ENCODE measurements at regions of chr16 and their contacts with region 1.

Region 1: GRCh38 chr16:10737068-10737625 is 6.5 kb upstream of the NUBP1 start:
- DNase-seq: no peak
- ATAC-seq: peak; percentile 60

Region 2: DNA sequence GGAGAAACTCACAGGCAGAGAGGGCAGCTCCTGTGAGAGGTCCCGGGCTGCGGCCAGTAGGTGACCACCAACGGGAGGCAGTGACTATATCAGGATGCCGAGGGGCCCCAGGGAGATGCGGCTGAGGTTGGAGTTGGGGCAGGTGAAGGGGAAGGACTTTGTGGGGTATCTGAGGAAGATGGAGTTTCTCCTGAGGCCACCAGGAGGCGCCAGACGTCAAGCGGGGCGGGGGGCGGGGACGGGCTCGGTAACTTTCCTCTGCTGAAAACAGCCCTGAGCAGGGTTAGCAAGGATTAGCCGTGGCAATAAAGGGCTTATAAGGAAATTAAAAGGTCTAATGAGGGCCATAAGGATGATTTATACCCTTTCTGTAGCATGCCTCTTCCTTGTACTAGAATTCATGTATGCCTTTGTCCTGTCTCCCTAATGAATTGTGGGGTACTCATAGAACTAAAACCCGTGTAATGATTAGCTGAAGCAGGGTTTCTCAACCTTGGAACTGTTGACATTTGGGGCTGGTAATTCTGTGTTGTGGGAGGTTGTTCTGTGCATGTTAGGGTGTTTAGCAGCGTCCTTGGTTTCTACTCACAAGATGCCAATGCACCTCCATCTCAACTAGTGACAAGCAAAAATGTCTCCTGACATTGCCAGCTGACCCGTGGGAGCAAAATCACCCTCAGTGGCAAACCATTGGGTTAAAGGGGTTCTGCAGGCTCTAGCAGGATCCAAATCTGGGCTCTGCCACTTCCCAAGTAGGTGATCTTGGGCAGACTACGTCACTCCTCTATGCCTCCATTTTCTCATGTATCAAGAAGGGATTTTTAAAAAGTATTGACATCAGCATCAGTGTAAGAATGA is 480.1 kb before region 1 on chr16:
- intact Hi-C with region 1: loop called (anchors 5 kb)
- DNase-seq: no peak
- ATAC-seq: no peak

Region 3: GRCh38 chr16:10314811-10315210 is 422.3 kb before region 1 on chr16:
- intact Hi-C with region 1: loop called (anchors 10 kb)
- DNase-seq: no peak
- ATAC-seq: no peak

Region 4: DNA sequence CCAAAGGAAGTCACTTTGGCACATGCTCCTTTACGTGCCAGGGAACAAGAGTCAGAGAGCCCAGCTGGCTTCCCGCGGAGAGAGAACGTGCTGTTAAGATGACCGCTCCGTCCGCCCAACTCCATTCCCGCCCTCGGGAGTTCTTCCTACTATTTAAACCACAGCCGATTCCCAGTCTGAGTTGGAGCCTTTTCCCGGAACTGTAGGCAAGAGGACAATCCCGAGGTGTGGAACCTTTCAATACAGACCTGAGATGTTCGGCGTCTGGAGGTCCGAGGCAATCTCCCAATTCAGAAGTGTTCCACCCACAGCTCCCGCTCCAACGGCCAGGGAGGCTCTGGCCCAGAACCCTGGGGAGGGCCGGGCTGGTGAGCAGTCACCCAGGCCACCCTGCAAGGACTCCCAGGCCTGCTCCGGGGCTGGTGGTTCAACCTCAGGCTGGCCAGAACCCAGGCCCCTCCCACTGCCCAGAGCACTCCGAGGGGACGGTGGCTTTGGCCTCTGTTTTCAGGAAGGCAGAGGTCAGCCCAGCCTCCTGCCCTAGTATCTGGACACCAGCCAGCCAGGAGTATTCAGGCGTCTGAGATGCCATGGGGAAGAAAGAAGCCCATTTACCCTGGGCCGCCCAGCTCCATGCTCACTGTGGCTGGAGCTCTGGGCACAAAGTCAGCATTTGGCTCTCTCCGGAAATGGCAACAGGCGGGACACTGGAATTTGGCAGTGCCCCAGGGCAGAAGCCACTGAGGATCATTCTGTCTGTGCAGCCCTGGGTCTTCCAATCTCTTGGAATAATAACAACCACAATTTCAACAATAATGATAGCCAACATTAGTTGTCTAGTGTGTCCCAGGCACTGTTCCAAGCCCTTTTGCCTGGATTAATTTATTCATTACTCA is 178.2 kb before region 1 on chr16:
- intact Hi-C with region 1: loop called (anchors 5 kb)
- DNase-seq: peak; percentile 86
- ATAC-seq: peak; percentile 80

Region 5: GRCh38 chr16:10616730-10617555 is 120.2 kb before region 1 on chr16:
- intact Hi-C with region 1: loop called (anchors 5 kb)
- DNase-seq: peak; percentile 76
- ATAC-seq: peak; percentile 65